OCI-LY7 (cell line): ENCODE measurements at regions of chr3 and their contacts with region 1.

Region 1: GRCh38 chr3:23202921-23203707 is at the start of gene UBE2E2:
- DNase-seq: peak; percentile 88
- H3K4me3 ChIP-seq: peak within 1 kb of the TSS; percentile 99
- H3K27ac ChIP-seq: peak within 1 kb of the TSS; percentile 33
- H3K4me1 ChIP-seq: peaks cover 29% of the 10 kb centered on the region
- CTCF ChIP-seq: no peak
- total RNA-seq, gene UBE2E2: 41.1 and 63.2 TPM in 2 replicates

Region 2: DNA sequence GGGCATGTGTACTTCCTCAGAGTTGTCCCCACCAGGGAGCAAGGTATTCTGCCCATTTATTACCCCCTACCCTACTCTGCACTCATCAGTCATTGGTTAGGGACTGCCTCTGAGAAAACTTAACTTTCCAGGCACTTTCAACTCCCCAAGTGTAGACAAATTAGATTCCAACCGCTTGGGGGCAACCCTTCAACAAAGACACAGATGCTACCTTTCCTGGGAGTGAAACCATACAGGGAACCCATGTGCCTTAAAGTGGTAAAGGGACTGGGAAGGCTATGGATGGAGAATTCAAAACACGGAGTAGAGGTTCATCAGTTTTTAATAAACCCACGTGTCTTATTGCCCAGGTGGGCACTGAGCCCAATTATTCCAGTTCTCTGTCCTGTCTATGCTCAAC is 19.4 kb before region 1 on chr3:
- CTCF ChIA-PET with region 1: no interaction called
- POLR2A ChIA-PET with region 1: no interaction called
- intact Hi-C with region 1: no loop called
- DNase-seq: peak; percentile 58
- H3K4me3 ChIP-seq: no peak overlapping the region
- H3K27ac ChIP-seq: no peak overlapping the region
- H3K4me1 ChIP-seq: peaks cover 19% of the 10 kb centered on the region
- CTCF ChIP-seq: peak; percentile 75

Region 3: DNA sequence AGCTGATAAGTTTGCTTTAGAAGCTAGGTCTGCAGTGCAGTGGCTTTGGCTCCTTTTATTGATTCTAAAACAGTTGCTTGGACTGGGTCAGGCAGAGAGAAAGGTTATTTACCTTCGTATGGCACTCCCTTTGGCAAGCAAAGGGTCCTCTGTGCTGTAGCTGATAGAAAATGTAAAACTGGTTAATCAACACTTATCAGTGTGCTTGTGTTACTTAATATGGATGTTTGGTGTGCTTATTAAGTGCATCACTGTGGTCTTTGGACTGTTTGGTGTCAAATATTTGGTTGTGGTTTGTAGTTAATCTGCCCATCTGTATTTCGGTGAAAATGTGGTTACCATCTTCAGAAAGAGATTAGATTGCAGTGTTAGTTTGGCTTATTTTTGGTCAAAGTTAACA is 16.0 kb after region 1 on chr3:
- CTCF ChIA-PET with region 1: interaction called, 3 read pairs
- POLR2A ChIA-PET with region 1: interaction called, 11 read pairs
- intact Hi-C with region 1: no loop called
- DNase-seq: no peak
- H3K4me3 ChIP-seq: peak overlapping the region; percentile 3
- H3K27ac ChIP-seq: peak overlapping the region; percentile 16
- H3K4me1 ChIP-seq: peaks cover 49% of the 10 kb centered on the region
- CTCF ChIP-seq: no peak

Region 4: DNA sequence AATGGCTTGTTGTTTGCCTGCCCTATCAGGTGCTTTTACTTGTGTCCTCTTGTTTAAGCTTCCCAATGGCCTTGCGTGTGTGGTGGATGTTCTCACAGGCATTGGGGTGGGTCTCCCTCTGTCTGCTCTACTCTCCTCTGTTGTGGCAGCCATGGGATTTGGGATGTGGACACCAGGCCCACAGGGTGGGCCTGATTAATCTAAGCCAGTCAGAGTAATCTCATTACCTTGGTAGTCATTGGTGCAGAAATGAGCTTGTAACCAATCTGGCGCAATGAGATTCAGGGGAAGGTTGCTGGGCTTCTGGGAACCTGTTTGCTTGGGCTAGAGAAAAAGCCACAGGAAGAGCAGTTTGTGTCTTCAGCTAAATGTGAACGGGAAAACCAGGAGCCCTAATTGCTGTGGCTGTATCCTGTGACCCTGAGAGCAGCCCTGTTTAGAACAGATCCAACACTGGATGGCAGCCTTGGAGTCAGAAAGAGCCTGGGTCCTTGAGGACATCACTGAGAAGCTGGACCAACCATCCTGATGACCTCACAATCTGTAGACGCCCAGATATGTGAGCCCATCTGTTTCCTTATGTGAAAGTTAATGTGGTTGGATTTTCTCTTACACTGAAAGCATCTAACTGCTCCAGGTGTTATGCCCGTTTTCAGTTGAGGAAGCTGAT is 445.3 kb after region 1 on chr3:
- CTCF ChIA-PET with region 1: no interaction called
- POLR2A ChIA-PET with region 1: no interaction called
- intact Hi-C with region 1: loop called (anchors 5 kb)
- DNase-seq: no peak
- H3K4me3 ChIP-seq: no peak overlapping the region
- H3K27ac ChIP-seq: peak overlapping the region; percentile 49
- H3K4me1 ChIP-seq: peaks cover 39% of the 10 kb centered on the region
- CTCF ChIP-seq: 0 out of 2 replicates have a peak, but pooled peaks have one; percentile 23